Activated CD4-positive, alpha-beta T cell treated with anti-CD3 and anti-CD28 coated beads, Interleukin-2, amount 10 ng/mL, durations not matched to agents 7 days and 5 days (primary cell): ENCODE measurements at regions of chr19 and their contacts with region 1.

Region 1: DNA sequence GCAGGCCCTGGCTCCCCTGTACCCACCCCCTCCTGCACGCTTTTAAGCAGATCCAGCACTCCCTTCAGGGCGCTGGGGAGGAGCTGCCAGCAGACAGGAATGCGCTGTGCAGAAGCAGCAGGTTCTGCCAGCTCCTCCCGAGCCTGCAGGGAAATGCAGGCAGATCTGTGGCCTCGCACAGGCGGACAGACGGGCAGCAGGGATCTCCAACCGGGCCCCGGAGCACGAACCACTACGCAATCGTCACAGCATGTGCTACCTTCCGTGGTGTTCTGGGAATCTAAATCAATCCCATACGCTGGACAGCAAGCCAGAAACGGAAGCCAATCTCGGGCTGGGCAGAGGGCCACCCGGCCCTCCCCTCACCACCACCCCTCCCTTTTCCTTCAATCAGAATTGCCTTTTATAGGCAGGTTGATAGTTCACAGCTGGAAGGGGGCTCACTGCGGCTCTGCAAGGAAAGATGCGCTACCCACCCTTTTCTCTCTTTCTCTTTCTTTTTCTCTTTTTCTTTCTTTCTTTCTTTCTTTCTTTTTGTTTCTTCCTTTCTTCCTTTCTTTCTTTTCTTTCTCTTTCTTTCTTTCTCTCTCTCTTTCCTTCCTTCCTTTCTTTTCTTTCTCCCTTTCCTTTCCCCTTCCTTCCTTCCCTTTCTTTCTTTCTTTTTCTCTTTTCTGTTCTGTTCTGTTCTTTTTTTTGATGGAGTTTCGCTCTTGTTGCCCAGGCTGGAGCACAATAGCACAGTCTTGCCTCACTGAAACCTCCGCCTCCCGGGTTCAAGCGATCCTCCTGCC is 99.9 kb downstream of the GNG7 start:
- DNase-seq: no peak
- H3K4me3 Mint-ChIP-seq: no peak overlapping the region
- H3K27ac Mint-ChIP-seq: no peak overlapping the region
- H3K4me1 Mint-ChIP-seq: peaks cover 25% of the 10 kb centered on the region
- H3K27me3 Mint-ChIP-seq: peaks cover 2% of the 10 kb centered on the region

Region 2: DNA sequence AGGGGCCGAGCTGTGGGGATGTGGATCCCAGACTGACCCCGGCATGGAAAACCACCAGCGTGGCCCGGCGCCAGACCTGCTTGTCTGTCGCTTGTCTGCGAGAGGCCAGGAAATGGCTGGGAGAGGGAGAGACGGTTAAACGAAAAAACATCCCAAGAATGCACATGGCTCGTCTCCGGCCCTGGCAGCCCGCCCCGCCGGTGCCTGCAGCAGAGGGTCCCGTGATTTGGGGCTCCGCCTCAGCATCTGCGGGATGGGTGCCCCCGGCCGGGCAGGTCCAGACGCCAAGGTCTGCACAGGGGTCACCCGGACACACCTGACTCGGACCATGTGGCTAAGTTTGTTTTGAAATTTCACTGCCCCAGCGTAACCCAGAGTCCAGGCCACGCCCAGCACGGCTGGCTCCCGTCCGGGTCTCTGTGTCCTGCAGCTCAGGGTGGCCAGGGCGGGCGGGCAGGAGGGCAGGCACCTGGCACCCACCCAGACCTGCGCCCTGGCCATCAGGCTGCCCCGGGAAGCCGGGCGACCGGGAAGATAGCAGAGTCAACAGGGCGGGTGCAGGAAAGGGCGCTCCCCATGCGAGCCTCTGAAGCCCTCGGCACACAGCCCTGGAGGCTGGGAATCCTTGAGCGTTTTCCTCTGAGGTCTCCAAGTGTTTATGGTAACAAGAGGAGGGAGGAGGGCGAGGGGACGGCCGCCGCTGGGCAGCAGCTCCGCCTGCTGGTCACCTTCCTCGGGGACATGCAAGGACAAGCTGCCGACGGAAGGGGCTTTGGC is 23.5 kb before region 1 on chr19:
- CTCF ChIA-PET with region 1: interaction called, 13 read pairs
- POLR2A ChIA-PET with region 1: no interaction called
- DNase-seq: peak; percentile 70
- H3K4me3 Mint-ChIP-seq: no peak overlapping the region
- H3K27ac Mint-ChIP-seq: no peak overlapping the region
- H3K4me1 Mint-ChIP-seq: peaks cover 10% of the 10 kb centered on the region
- H3K27me3 Mint-ChIP-seq: peaks cover 10% of the 10 kb centered on the region

Region 3: DNA sequence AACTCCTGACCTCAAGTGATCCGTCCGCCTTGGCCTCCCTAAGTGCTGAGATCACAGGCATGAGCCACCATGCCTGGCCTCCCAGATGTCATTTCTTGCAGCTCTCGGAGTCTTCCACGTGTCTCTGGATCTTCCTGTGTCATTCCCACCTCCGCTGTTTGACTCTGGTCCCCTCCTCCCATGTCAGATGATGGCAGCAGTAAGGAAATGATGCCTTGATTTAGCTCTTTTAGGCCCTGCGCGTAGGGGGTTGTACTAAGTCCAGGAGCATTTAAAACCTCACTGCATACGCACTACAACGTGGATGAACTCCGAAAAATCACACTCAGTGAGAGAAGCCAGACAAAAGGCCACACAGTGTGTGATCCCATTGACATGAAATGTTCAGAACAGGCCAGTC is 13.1 kb before region 1 on chr19:
- CTCF ChIA-PET with region 1: no interaction called
- POLR2A ChIA-PET with region 1: no interaction called
- DNase-seq: no peak
- H3K4me3 Mint-ChIP-seq: no peak overlapping the region
- H3K27ac Mint-ChIP-seq: no peak overlapping the region
- H3K4me1 Mint-ChIP-seq: peaks cover 2% of the 10 kb centered on the region
- H3K27me3 Mint-ChIP-seq: peaks cover 13% of the 10 kb centered on the region

Region 4: GRCh38 chr19:2627319-2627829 is 24.8 kb after region 1 on chr19:
- CTCF ChIA-PET with region 1: no interaction called
- POLR2A ChIA-PET with region 1: no interaction called
- DNase-seq: no peak
- H3K4me3 Mint-ChIP-seq: no peak overlapping the region
- H3K27ac Mint-ChIP-seq: no peak overlapping the region
- H3K4me1 Mint-ChIP-seq: peaks cover 48% of the 10 kb centered on the region
- H3K27me3 Mint-ChIP-seq: no peaks in the 10 kb centered on the region